BJ (cell line): ENCODE measurements at regions of chr10 and their contacts with region 1.

Region 1: DNA sequence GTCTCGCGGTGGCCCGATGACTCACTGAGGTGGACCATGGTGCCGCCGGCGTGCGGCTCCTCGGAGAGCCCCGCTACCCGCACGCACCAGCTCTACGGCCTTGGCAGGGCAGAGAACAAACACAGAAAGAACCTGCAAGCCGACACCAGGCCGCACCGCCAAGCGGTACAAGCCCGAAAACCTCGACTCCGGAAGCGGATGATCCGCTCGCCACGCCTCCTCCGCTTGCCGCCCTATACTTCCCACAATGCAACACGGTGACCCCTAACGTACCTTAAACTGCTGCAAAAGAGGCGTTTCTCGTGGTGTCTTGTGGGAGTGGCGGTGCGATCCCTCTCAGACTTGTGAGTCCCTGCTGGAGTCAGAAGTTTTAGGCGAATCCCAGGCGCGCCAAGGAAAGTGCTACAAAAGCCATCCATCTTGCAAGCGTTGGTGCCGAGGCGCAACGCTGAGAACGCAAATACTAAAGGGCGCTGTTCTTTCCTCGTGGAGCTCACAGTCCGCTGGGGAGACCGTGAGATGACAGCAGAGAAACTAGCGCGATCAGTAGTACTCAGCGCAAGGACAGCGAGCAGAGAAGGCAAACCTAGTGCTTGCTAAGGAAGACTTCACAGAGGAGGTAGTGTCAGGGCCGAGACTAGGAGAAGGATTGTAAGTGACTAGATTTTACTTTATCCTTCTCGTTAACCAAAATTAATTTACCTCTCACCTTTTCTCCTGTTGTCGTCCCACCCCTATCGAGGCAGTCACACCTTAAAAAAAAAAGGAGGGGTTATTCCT is at the start of gene MRPS16:
- DNase-seq: peak; percentile 83
- H3K4me3 ChIP-seq: peak within 1 kb of the TSS; percentile 83
- H3K27me3 ChIP-seq: no peaks in the 10 kb centered on the region
- CTCF ChIP-seq: no peak
- polyA plus RNA-seq, gene MRPS16: 74.4 and 87.9 TPM in 2 replicates

Region 2: GRCh38 chr10:73096449-73097304 is 156.0 kb before region 1 on chr10 and contains the start of gene P4HA1:
- CTCF ChIA-PET with region 1: no interaction called
- POLR2A ChIA-PET with region 1: no interaction called
- DNase-seq: peak; percentile 89
- H3K4me3 ChIP-seq: peak within 1 kb of the TSS; percentile 72
- H3K27me3 ChIP-seq: no peaks in the 10 kb centered on the region
- CTCF ChIP-seq: peak; percentile 72
- polyA plus RNA-seq, gene P4HA1: 91.7 and 260 TPM in 2 replicates

Region 3: DNA sequence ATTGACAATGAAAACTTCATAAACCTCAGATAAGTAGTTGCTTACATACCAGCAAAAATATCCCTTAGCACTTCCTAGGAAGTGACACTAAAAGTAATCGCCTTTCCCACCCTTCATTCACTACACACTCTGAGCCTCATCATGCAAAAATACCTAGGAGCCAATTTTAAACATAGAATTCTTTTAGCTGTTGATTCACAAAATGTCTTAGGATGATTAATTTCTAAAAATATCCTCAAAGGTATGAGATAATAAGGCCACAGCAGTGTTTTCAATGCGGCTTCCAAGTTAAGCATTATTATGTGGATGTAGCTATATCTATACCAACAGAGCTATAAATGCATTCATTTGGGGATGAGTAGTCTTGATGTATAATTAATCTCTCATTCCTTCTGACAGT is 18.8 kb before region 1 on chr10:
- CTCF ChIA-PET with region 1: no interaction called
- POLR2A ChIA-PET with region 1: no interaction called
- DNase-seq: no peak
- H3K4me3 ChIP-seq: no peak overlapping the region
- H3K27me3 ChIP-seq: no peaks in the 10 kb centered on the region
- CTCF ChIP-seq: no peak

Region 4: GRCh38 chr10:73263948-73264347 is 11.3 kb after region 1 on chr10:
- CTCF ChIA-PET with region 1: interaction called, 13 read pairs
- POLR2A ChIA-PET with region 1: interaction called, 3 read pairs
- DNase-seq: no peak
- H3K4me3 ChIP-seq: no peak overlapping the region
- H3K27me3 ChIP-seq: peaks cover 3% of the 10 kb centered on the region
- CTCF ChIP-seq: peak; percentile 56

Region 5: DNA sequence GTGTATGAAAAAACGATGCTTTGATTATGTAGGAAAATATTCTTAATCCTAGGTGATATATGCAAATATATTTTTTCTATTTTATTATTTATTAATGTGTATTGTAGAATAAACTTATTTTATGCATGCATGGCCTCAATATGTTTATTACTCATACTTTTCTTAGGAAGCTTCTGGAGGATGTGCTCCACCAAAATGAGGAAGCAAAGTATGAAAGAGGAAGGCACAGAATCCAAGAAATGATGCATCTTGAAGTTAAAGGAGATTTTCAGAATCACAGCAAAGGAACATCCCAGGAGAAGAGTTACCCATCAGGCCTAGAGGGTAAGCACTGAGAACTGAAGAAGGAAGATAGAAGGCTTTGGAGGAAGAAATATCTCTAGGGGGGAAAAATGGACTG is 34.8 kb after region 1 on chr10:
- CTCF ChIA-PET with region 1: no interaction called
- POLR2A ChIA-PET with region 1: no interaction called
- DNase-seq: no peak
- H3K4me3 ChIP-seq: no peak overlapping the region
- H3K27me3 ChIP-seq: no peaks in the 10 kb centered on the region
- CTCF ChIP-seq: no peak

Region 6: DNA sequence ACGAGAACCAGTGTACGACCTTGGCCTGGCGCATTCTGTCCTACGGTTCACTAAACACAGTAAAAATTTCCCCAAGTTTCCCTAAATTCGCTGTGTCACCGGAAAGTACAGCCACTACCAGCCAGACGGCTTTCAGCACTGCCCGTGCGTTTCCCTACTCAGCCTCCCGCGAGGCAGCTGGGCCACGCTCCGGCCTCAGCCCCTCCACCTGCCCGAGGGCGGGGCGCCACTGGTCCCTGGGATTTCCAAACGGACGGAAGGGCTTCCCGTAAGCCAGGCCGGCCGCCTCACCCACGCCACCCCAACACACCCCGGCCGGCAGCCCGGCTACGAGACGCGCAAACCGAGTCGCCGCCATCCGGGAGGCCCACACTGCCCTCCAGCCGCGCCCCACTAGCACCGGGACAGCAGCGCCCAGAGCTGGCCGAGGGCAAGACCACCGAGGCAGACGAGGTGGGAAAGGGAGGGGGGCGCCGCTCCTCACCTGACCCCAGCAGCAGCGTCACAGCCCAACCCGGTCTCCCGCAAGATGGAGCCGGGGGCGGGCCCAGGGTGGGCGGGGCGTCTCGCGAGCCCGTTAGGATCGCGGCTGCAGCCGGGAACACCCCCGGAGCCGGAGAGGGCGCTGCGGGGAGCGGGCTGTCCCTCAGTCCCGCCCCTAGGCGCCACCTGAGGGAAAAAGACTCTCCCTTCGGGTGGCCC is 161.0 kb after region 1 on chr10 and contains the start of gene ANXA7:
- CTCF ChIA-PET with region 1: no interaction called
- POLR2A ChIA-PET with region 1: no interaction called
- DNase-seq: peak; percentile 23
- H3K4me3 ChIP-seq: peak within 1 kb of the TSS; percentile 97
- H3K27me3 ChIP-seq: no peaks in the 10 kb centered on the region
- CTCF ChIP-seq: peak; percentile 46
- polyA plus RNA-seq, gene ANXA7: 123 and 134 TPM in 2 replicates